CD8-positive, alpha-beta memory T cell (primary cell): ENCODE measurements at regions of chr3 and their contacts with region 1.

Region 1: DNA sequence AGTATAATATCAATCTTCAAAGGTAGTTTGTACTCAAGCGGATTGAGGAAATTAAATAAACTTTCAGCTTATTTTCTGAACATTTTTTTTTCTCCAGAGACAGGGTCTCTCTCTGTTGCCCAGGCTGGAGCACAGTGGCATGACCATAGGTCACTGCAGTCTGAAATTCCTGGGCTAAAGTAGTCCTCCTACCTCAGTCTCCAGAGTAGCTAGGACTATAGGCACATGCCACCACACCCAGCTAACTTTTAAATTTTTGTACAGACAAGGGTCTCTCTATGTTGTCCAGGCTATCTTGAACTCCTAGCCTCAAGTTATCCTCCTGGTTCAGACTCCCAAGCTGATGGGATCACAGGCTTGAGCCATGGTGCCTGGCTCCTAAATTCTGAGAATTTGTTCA is 97.1 kb downstream of the FAIM start:
- DNase-seq: no peak
- H3K4me3 ChIP-seq: no peak overlapping the region
- H3K4me3 Mint-ChIP-seq: no peak overlapping the region
- H3K27ac ChIP-seq: no peak overlapping the region
- H3K27ac Mint-ChIP-seq: no peak overlapping the region
- H3K4me1 ChIP-seq: no peaks in the 10 kb centered on the region
- H3K4me1 Mint-ChIP-seq: no peaks in the 10 kb centered on the region
- H3K27me3 ChIP-seq: no peaks in the 10 kb centered on the region
- H3K27me3 Mint-ChIP-seq: no peaks in the 10 kb centered on the region

Region 2: DNA sequence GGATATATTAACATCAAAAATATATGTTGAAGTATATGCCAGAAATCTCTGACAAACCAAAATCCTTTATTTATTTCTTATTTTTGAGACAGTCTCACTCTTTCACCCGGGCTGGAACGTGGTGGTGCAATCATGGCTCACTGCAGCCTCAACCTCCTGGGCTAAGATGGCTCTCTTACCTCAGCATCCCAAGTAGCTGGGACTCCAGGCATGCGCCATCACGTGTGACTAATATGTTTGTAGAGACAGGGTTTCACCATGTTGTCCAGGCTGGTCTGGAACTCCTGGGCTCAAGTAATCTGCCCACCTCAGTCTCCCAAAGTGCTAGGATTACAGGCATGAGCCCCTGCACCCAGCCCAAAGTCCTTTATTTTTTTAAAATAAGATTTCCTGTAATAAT is 85.2 kb before region 1 on chr3:
- CTCF ChIA-PET with region 1: no interaction called
- POLR2A ChIA-PET with region 1: no interaction called
- DNase-seq: no peak
- H3K4me3 ChIP-seq: no peak overlapping the region
- H3K4me3 Mint-ChIP-seq: no peak overlapping the region
- H3K27ac ChIP-seq: no peak overlapping the region
- H3K27ac Mint-ChIP-seq: no peak overlapping the region
- H3K4me1 ChIP-seq: no peaks in the 10 kb centered on the region
- H3K4me1 Mint-ChIP-seq: no peaks in the 10 kb centered on the region
- H3K27me3 ChIP-seq: no peaks in the 10 kb centered on the region
- H3K27me3 Mint-ChIP-seq: no peaks in the 10 kb centered on the region

Region 3: DNA sequence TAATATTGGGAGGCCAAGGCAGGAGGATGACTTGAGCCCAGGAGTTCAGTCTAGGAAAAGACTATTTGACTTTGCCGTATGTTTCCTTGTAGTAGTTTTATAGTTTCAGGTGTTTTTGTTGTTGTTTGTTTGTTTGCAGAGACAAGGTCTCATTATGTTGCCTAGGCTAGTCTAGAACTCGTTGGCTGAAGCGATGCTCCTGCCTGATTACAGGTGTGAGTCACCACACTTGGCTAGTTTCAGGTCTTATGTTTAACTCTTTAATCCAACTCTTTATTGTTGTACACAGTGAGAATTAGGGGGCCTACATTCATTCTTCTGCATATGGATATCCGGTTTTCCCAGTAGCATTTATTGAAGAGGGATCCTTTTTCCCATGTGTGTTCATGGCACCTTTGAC is 65.1 kb before region 1 on chr3:
- CTCF ChIA-PET with region 1: no interaction called
- POLR2A ChIA-PET with region 1: no interaction called
- DNase-seq: no peak
- H3K4me3 ChIP-seq: no peak overlapping the region
- H3K4me3 Mint-ChIP-seq: no peak overlapping the region
- H3K27ac ChIP-seq: no peak overlapping the region
- H3K27ac Mint-ChIP-seq: no peak overlapping the region
- H3K4me1 ChIP-seq: no peaks in the 10 kb centered on the region
- H3K4me1 Mint-ChIP-seq: no peaks in the 10 kb centered on the region
- H3K27me3 ChIP-seq: no peaks in the 10 kb centered on the region
- H3K27me3 Mint-ChIP-seq: no peaks in the 10 kb centered on the region

Region 4: DNA sequence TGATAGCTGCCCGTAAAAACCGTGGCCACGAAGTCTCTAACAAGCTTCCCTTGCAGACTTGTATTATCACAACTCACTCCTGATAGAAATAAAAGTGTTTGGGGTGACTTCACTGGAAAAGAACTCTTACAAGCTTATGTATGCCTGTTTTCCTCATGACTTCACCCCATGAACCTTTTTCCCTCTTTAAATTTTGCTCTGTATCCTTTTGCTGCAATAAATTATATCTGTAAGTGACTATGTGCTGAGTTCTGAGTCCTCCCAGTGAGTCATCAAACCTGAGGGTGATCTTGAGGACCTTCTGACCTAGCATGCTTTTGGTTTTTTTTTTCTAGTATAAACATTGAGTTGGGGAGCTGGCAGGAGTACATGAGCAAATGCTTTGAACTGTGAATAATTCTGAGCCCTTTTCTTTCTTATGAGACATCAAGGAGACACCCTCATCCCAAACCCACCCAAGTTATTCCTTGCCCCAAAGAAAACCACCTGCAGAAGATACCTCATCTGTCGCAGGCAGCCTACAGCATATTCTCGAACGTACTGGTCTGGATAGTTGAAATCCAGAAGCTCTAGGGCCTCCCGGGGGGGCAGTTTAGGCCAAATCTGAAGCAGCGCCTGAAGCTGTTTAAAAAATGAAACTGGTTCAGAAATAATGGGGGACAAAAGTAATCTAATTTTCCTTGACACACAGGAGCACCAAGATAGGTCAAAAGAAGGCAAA is 11.2 kb before region 1 on chr3:
- CTCF ChIA-PET with region 1: interaction called, 11 read pairs
- POLR2A ChIA-PET with region 1: no interaction called
- DNase-seq: no peak
- H3K4me3 ChIP-seq: no peak overlapping the region
- H3K4me3 Mint-ChIP-seq: no peak overlapping the region
- H3K27ac ChIP-seq: peak overlapping the region; percentile 33
- H3K27ac Mint-ChIP-seq: peak overlapping the region in 2 of 8 donors; percentile 24 to 26
- H3K4me1 ChIP-seq: no peaks in the 10 kb centered on the region
- H3K4me1 Mint-ChIP-seq: no peaks in the 10 kb centered on the region
- H3K27me3 ChIP-seq: no peaks in the 10 kb centered on the region
- H3K27me3 Mint-ChIP-seq: no peaks in the 10 kb centered on the region

Region 5: DNA sequence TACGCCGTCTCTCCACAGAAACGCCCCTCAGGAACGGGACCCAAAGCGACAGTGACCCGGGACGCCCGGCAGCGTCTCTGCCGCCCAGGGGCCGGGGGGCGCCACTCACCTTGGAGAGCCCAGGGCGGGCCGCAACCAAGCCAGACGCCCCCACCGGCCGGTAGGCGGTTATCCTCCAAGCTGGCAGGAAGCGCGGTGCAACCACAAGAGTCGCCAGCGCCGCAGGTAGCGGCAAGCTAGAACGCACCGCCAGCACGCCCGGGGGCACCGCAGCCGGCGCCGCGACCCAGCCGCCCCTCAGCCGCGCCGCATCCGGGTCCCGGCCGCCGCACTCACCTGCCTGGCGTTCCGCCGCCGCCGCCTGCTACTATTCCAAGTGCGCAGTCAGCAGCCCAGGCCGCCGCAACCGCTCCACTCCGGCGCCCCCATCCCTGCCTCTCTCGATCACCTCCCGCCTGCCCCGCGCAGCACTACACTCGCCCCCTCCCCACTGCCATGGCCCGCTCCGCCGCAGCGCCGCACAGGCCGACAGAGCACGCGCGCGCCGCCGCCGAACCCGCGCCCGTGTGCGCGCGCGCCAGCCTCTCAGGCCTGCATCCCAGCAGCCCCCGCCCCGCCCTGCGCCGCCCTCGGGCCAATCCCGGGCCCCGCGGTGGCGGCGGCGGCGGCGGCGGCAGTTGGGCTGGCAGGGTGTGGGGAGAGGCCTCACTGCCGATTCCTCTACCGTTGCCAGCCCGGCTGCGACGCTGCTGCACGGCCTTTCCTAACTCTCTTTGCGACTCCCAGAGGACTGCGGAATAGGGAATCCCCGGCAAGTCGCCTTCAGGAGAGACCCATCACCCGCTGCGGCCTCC is 128.9 kb after region 1 on chr3 and contains the start of gene PIK3CB:
- CTCF ChIA-PET with region 1: no interaction called
- POLR2A ChIA-PET with region 1: no interaction called
- DNase-seq: peak; percentile 75 to 89 (median 85)
- H3K4me3 ChIP-seq: peak within 1 kb of the TSS; percentile 66
- H3K4me3 Mint-ChIP-seq: peak within 1 kb of the TSS; percentile 87 to 97 (median 93)
- H3K27ac ChIP-seq: peak within 1 kb of the TSS; percentile 85
- H3K27ac Mint-ChIP-seq: peak within 1 kb of the TSS; percentile 84 to 99 (median 95)
- H3K4me1 ChIP-seq: peaks cover 16% of the 10 kb centered on the region
- H3K4me1 Mint-ChIP-seq: peaks cover 25 to 33% (median 32%) of the 10 kb centered on the region in 3 donors
- H3K27me3 ChIP-seq: no peaks in the 10 kb centered on the region
- H3K27me3 Mint-ChIP-seq: no peaks in the 10 kb centered on the region
- total RNA-seq, gene PIK3CB: 17.3 to 17.6 TPM